ENCODE measurements at regions of chr17 and their contacts with region 1.

Region 1: DNA sequence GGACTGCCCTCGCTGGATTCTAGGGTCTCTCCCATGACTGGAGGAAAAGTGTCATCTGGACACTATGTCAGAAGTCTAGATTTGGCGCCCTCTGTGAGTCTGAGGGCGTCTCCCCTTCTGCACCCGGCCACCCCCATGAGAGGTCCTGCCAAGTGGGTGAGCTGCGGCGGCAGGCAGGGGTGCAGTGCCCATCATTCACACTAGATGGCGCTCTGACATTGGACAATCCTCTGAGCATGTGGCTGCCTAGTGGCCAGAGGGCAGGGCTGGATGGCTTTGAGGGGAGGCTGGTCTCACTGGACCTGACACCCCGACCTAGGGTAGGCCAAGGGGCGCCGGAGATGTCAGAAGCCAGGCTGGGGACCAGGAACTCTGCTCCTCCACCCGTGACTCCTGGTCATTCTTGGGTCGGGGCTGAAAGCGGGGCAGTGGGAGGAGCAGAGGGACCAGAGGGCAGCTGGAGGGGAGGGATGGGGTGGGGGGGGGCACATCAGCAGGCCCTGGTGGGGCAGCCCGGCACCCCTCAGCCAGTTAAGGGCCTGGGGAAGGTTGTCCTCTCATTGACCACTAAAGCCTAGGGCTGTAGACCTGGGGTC is 28.0 kb downstream of the MRM1 start:
- DNase-seq: peak; percentile 99
- H3K4me3 Mint-ChIP-seq: no peak overlapping the region
- H3K27ac Mint-ChIP-seq: no peak overlapping the region
- H3K4me1 Mint-ChIP-seq: no peaks in the 10 kb centered on the region
- H3K27me3 Mint-ChIP-seq: peaks cover 53% of the 10 kb centered on the region
- CTCF ChIP-seq: peak; percentile 100

Region 2: GRCh38 chr17:36611345-36612072 is 17.8 kb before region 1 on chr17:
- CTCF ChIA-PET with region 1: interaction called, 11 read pairs
- intact Hi-C with region 1: no loop called
- DNase-seq: no peak
- H3K4me3 Mint-ChIP-seq: no peak overlapping the region
- H3K27ac Mint-ChIP-seq: no peak overlapping the region
- H3K4me1 Mint-ChIP-seq: no peaks in the 10 kb centered on the region
- H3K27me3 Mint-ChIP-seq: no peaks in the 10 kb centered on the region
- CTCF ChIP-seq: no peak

Region 3: DNA sequence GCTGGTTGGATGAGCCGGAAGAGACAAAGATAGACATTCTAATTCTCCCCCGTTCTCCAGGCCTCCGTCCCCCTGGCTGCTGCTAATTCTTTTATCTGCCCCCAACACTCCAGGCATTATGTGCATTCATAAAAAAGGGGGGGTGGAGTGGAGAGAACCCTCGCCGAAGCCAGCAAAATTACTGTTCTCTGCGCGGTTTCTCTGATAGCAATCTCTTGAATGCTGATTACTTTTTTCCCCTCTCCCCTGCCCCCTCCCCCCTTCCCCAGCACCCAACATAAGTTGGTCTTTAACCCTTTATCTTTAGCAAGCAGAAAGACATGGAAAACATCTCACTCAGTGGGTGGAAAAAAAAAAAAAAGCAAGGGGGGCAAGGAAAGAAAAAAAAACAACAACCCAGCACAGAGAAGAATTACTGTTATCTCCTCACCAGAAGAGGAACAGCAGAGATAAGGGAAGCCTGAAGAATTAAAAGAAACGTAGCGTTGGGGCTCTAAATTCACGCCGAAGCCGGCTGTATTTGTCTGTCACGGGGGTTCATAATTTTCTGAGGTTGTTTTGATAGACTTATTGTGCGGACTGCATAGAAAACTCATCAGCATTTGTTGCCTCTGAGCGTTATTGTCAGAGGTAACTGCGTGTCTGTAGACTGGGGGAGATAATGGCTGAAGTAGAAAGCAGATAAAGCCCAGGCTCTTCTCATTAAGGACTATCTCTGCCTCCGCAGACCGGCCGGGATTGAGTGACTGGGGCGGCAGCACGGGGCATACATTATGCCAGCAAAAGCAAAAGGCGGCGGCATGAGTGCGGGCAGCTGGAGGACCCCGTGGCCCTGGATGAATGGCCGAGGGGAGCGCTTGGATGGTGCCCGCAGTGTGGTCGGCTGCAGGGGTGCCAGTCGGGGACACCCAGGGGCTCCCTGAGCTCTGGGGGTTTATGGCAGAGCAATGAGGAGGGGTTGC is 99.0 kb after region 1 on chr17:
- CTCF ChIA-PET with region 1: no interaction called
- intact Hi-C with region 1: no loop called
- DNase-seq: no peak
- H3K4me3 Mint-ChIP-seq: no peak overlapping the region
- H3K27ac Mint-ChIP-seq: no peak overlapping the region
- H3K4me1 Mint-ChIP-seq: no peaks in the 10 kb centered on the region
- H3K27me3 Mint-ChIP-seq: peaks cover 100% of the 10 kb centered on the region
- CTCF ChIP-seq: no peak

Region 4: GRCh38 chr17:36755586-36755985 is 126.2 kb after region 1 on chr17:
- CTCF ChIA-PET with region 1: interaction called, 15 read pairs
- intact Hi-C with region 1: loop called (anchors 1 kb)
- DNase-seq: peak; percentile 84
- H3K4me3 Mint-ChIP-seq: no peak overlapping the region
- H3K27ac Mint-ChIP-seq: no peak overlapping the region
- H3K4me1 Mint-ChIP-seq: no peaks in the 10 kb centered on the region
- H3K27me3 Mint-ChIP-seq: peaks cover 77% of the 10 kb centered on the region
- CTCF ChIP-seq: peak; percentile 93

Region 5: GRCh38 chr17:37047631-37048104 is 418.3 kb after region 1 on chr17:
- CTCF ChIA-PET with region 1: interaction called, 7 read pairs
- intact Hi-C with region 1: loop called (anchors 2 kb)
- DNase-seq: peak; percentile 95
- H3K4me3 Mint-ChIP-seq: no peak overlapping the region
- H3K27ac Mint-ChIP-seq: no peak overlapping the region
- H3K4me1 Mint-ChIP-seq: peaks cover 7% of the 10 kb centered on the region
- H3K27me3 Mint-ChIP-seq: no peaks in the 10 kb centered on the region
- CTCF ChIP-seq: peak; percentile 100

Region 6: DNA sequence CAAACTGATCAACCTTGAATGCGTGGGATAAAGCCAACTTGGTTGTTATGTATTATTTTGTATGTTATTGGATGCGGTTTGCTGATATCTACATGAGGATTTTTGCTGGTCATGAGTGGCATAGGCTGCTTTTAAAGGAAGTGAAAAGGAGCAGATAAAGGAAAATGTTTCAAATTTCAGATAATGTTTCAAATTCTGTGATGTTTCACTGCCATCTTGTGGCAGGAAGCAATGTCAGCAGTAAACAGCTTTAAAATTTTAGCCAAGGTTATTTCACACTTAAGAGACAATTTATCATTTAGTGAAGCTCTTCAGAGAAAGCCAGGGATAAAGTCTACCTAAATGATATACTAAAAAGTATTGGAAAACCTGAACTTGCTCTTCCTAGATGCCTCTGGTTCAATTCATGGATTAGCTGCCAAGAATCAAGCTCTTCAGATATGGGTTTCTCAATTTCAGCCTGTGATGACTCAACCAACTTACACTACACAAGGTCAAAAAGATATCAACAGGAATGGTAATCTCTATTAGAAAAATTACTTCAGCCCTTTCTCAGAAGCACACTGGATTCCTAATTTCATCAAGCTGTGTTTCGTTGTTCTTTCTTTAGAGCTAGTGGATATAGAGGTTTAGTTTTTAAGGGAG is 610.5 kb after region 1 on chr17:
- CTCF ChIA-PET with region 1: interaction called, 5 read pairs
- intact Hi-C with region 1: loop called (anchors 5 kb)
- DNase-seq: no peak
- H3K4me3 Mint-ChIP-seq: no peak overlapping the region
- H3K27ac Mint-ChIP-seq: no peak overlapping the region
- H3K4me1 Mint-ChIP-seq: peaks cover 11% of the 10 kb centered on the region
- H3K27me3 Mint-ChIP-seq: no peaks in the 10 kb centered on the region
- CTCF ChIP-seq: peak; percentile 94